Panc1 (cell line): ENCODE measurements at regions of chr16 and their contacts with region 1.

Region 1: DNA sequence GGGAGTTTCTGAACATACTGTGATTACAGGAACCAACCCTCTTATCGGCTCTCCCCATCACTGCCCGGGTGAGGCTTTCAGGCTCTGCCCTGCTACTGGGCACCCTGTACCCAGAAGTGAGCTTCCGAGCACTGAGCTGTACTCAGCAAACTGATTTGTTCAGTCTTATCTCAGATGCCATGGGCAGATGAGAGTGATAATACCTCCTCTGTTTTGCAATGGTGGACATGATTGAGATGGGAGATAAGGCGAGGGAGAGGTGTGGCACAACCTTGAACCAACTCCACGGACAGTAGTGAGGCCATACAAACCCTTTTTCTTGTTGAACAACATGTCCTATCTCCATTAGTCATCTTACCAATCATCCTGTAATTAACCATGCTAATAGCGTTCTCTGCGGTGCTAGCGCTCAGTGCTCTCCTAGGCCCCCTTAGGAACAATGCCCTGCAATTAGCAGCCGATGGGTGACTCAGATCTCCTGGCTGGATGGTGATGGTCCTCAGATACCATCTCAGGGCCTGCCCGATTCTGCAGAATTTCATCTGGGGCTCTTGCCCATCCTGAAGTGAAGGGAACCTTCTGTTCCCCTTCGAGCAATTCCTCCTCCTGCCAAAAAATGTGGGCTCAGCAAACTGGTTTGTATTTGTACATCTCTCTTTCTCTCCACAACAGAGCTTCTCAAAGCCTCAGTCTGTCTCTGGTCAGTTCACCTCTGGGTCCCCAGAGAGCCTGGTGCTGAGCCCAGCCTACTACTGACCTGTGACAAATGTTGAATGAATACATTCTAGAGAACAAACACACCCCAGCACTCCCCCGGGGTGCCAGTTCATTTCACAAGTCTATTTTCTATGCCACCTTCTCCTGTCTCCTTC is 139.3 kb upstream of the IRX3 start:
- DNase-seq: no peak
- ATAC-seq: no peak
- H3K4me3 ChIP-seq: no peak overlapping the region
- H3K27ac ChIP-seq: no peak overlapping the region
- H3K4me1 ChIP-seq: no peaks in the 10 kb centered on the region
- H3K27me3 ChIP-seq: no peaks in the 10 kb centered on the region; the same call in 1 of the 2 replicates
- CTCF ChIP-seq: no peak

Region 2: GRCh38 chr16:54657058-54657708 is 231.3 kb after region 1 on chr16:
- CTCF ChIA-PET with region 1: interaction called, 14 read pairs
- POLR2A ChIA-PET with region 1: no interaction called
- in situ Hi-C with region 1: no loop called
- intact Hi-C with region 1: no loop called
- DNase-seq: peak; percentile 13
- ATAC-seq: no peak
- H3K4me3 ChIP-seq: no peak overlapping the region
- H3K27ac ChIP-seq: no peak overlapping the region
- H3K4me1 ChIP-seq: no peaks in the 10 kb centered on the region
- H3K27me3 ChIP-seq: 0 out of 2 replicates have a peak, but pooled peaks cover 2% of the 10 kb centered on the region
- CTCF ChIP-seq: no peak